Panc1 (cell line): ENCODE measurements at regions of chr9 and their contacts with region 1.

Region 1: GRCh38 chr9:113199683-113200329 is 21.3 kb downstream of the FKBP15 start:
- DNase-seq: no peak
- ATAC-seq: no peak
- H3K4me3 ChIP-seq: no peak overlapping the region
- H3K27ac ChIP-seq: no peak overlapping the region
- H3K4me1 ChIP-seq: no peaks in the 10 kb centered on the region
- H3K27me3 ChIP-seq: no peaks in the 10 kb centered on the region
- CTCF ChIP-seq: no peak

Region 2: DNA sequence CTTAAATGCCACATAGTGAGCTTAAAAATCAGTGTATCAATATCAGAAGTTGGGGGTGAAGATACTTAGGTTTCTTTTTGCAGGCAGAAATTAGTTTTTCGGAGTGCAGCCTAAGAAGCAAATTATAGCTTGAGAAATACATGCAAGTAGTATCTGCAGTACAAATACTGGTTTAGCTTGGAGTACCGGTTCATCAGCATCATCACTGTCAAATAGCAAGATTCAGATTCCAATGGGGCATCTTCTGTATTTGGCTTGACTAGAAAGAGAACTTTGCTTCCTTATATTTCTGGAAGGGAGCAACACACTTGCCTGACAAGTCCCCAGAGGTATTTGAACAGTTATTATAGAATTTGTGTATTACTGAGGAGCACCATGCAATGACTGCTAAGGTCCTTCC is 41.4 kb after region 1 on chr9:
- CTCF ChIA-PET with region 1: no interaction called
- POLR2A ChIA-PET with region 1: interaction called, 11 read pairs
- in situ Hi-C with region 1: no loop called
- intact Hi-C with region 1: no loop called
- DNase-seq: no peak
- ATAC-seq: no peak
- H3K4me3 ChIP-seq: no peak overlapping the region
- H3K27ac ChIP-seq: no peak overlapping the region
- H3K4me1 ChIP-seq: no peaks in the 10 kb centered on the region
- H3K27me3 ChIP-seq: no peaks in the 10 kb centered on the region
- CTCF ChIP-seq: no peak

Region 3: DNA sequence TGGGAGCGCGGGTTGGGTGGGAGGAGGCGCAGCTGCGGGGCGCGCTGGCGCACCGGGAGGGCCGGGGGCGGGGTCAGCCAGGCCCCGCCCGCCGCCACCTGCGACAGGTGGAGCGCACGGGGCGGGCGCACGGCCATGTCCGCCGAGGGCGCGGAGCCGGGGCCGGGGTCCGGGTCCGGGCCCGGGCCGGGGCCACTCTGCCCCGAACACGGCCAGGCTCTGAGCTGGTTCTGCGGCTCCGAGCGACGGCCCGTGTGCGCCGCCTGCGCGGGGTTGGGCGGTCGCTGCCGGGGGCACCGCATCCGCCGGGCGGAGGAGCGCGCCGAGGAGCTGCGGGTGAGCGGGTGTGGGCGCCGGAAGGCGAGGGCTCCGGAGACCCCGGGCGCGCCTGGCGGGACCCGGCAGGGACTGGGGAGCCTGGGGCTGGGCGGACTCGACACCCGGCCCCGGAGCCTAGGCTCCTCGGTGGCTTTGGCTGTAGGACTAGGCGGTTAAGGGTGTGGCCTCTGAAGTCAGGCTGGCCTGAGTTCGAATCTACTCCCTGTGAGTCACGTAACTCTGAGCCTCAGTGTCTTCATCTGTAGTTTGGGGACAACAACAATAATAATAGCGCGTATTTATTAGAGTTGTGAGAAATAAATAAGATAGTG is 149.8 kb after region 1 on chr9 and contains the start of gene BSPRY:
- CTCF ChIA-PET with region 1: no interaction called
- POLR2A ChIA-PET with region 1: no interaction called
- in situ Hi-C with region 1: no loop called
- intact Hi-C with region 1: no loop called
- DNase-seq: no peak
- ATAC-seq: peak; percentile 80
- H3K4me3 ChIP-seq: peak within 1 kb of the TSS; percentile 43 to 51
- H3K27ac ChIP-seq: no peak within 1 kb of the TSS
- H3K4me1 ChIP-seq: 0 out of 2 replicates have a peak, but pooled peaks cover 3% of the 10 kb centered on the region
- H3K27me3 ChIP-seq: peaks cover 14% of the 10 kb centered on the region
- CTCF ChIP-seq: no peak
- total RNA-seq, gene BSPRY: 0.13 TPM